Activated B cell treated with CpG ODN at 0.5 μM for 24 hours (primary cell): ENCODE measurements at regions of chr5 and their contacts with region 1.

Region 1: DNA sequence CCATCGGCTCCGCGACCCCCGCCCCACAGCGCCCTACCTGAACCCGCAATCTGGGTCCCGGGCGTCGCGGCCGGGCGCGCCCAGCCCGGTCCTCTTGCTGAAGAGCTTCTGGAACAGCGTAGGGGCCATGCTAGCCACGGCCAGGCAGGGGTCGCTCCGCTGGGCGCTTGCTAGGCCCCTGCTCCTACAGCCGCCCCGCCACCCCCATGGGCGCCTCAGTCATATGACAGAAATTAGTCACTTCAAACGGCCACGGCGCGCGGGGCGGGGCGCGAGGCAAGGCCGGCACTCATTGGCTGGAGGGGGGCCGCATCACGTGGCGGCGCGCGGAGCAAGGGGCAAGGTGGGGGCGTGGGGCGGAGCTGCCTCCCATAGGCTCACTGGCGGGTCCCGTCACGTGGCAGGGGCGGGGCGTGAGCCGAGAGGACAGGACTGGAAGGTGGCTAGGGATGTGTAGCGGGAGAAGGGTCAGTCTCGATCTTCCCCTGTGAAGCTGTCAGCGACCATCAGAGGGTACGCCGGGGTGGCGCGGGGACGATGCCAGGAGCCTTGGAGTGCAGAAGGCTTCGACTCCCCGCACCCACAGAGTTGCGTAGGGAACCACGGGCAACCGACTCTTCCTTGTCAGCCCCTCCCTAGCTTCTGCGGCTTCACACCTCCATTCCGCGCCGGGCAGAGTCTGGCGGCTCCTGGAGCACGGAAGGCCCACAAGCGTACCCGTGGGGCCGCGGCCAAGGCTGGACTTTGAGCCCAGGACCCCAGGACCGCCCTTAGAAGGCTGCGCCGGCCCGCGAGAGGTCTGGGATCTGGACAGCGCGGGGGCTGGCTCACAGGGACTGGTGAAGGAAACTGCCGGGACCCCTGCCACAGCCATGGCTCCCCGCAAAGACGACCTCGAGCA is at the start of gene FNIP1:
- DNase-seq: peak; percentile 99
- ATAC-seq: peak; percentile 94
- H3K4me3 Mint-ChIP-seq: peak within 1 kb of the TSS; percentile 97
- H3K27ac Mint-ChIP-seq: peak within 1 kb of the TSS; percentile 91
- H3K4me1 Mint-ChIP-seq: peaks cover 33% of the 10 kb centered on the region
- H3K27me3 Mint-ChIP-seq: no peaks in the 10 kb centered on the region
- CTCF ChIP-seq: no peak
- total RNA-seq, gene FNIP1: 29.8 and 34.0 TPM in 2 replicates

Region 2: DNA sequence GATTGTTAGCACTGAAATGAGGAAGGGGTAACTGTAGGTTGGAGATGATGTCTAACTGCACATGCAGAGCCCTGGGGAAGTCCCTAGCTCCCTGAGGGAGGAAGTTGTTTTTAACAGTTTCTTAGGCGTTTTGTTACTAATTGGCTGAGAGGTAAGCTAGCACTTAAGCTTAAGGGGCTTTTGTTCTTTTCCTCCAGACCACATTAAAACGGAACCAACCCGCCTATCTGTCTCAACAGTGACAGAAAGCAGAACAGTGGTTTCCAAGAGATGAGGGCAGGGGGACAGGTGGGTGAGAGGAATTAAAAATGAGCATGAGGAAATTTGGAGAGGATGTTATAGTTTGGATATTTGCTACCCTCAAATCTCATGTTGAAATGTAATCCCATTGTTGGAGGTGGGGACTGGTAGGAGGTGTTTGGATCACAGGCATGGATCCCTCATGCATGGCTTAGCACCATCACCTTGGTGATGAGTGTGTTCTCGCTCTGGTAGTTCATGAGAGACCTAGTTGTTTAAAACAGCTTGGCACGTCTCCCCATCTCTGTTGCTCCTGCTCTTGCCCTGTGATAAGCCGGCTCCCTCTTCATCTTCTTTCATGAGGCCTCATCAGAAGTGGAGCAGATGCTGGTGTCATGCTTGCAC is 587.4 kb before region 1 on chr5:
- CTCF ChIA-PET with region 1: no interaction called
- POLR2A ChIA-PET with region 1: no interaction called
- intact Hi-C with region 1: loop called (anchors 5 kb)
- DNase-seq: peak; percentile 44
- ATAC-seq: peak; percentile 87
- H3K4me3 Mint-ChIP-seq: peak overlapping the region; percentile 82
- H3K27ac Mint-ChIP-seq: peak overlapping the region; percentile 99
- H3K4me1 Mint-ChIP-seq: peaks cover 63% of the 10 kb centered on the region
- H3K27me3 Mint-ChIP-seq: no peaks in the 10 kb centered on the region
- CTCF ChIP-seq: no peak

Region 3: GRCh38 chr5:131536211-131536826 is 260.7 kb before region 1 on chr5:
- CTCF ChIA-PET with region 1: no interaction called
- POLR2A ChIA-PET with region 1: no interaction called
- intact Hi-C with region 1: loop called (anchors 2 kb)
- DNase-seq: no peak
- ATAC-seq: peak; percentile 84
- H3K4me3 Mint-ChIP-seq: peak overlapping the region; percentile 47
- H3K27ac Mint-ChIP-seq: peak overlapping the region; percentile 81
- H3K4me1 Mint-ChIP-seq: peaks cover 46% of the 10 kb centered on the region
- H3K27me3 Mint-ChIP-seq: no peaks in the 10 kb centered on the region
- CTCF ChIP-seq: no peak

Region 4: DNA sequence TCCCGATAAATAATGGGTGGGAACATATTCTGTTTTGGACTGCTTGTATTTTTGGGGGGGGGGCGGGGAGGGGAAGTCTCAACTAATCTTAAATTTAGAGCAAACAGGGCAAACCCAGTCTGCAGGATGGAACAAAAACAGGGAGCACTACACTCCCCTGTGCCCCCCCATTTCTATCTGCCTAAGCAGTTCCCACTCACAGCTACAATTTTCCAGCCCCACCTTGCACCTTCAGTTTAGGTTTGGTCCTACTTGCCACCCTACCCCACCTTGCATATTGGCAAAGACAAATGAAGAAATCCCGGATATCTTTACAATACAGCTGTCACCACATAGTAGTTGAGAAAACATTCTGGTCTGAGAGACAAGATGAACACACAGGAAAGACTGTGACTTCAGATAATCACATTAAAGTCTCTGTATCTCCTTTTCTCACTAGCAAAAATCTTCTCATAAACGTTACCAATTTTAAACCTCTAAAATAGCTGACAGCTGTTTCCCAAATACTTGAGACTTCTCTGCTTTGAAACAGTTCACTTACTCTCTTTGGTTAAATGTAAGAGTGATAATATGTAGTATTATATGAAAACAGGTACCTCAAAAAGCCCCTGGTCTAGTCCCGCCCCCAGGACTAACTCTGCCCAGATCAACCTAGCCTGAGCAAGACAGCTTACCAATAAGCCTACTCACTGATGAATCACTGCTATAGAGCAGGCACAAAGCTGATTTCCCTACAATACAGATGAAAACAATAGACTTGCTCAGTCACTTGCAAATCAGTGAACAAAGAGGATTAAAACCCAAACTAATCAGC is 156.8 kb before region 1 on chr5:
- CTCF ChIA-PET with region 1: no interaction called
- POLR2A ChIA-PET with region 1: interaction called, 10 read pairs
- intact Hi-C with region 1: loop called (anchors 1 kb)
- DNase-seq: no peak
- ATAC-seq: peak; percentile 89
- H3K4me3 Mint-ChIP-seq: peak overlapping the region; percentile 45
- H3K27ac Mint-ChIP-seq: peak overlapping the region; percentile 83
- H3K4me1 Mint-ChIP-seq: peaks cover 42% of the 10 kb centered on the region
- H3K27me3 Mint-ChIP-seq: no peaks in the 10 kb centered on the region
- CTCF ChIP-seq: no peak

Region 5: GRCh38 chr5:131747180-131748105 is 49.6 kb before region 1 on chr5:
- CTCF ChIA-PET with region 1: no interaction called
- POLR2A ChIA-PET with region 1: no interaction called
- intact Hi-C with region 1: loop called (anchors 10 kb)
- DNase-seq: no peak
- ATAC-seq: peak; percentile 54
- H3K4me3 Mint-ChIP-seq: peak overlapping the region; percentile 4
- H3K27ac Mint-ChIP-seq: peak overlapping the region; percentile 54
- H3K4me1 Mint-ChIP-seq: peaks cover 38% of the 10 kb centered on the region
- H3K27me3 Mint-ChIP-seq: no peaks in the 10 kb centered on the region
- CTCF ChIP-seq: no peak

Region 6: GRCh38 chr5:131863700-131864099 is 66.7 kb after region 1 on chr5:
- CTCF ChIA-PET with region 1: no interaction called
- POLR2A ChIA-PET with region 1: no interaction called
- intact Hi-C with region 1: no loop called
- DNase-seq: no peak
- ATAC-seq: no peak
- H3K4me3 Mint-ChIP-seq: no peak overlapping the region
- H3K27ac Mint-ChIP-seq: no peak overlapping the region
- H3K4me1 Mint-ChIP-seq: no peaks in the 10 kb centered on the region
- H3K27me3 Mint-ChIP-seq: no peaks in the 10 kb centered on the region
- CTCF ChIP-seq: no peak

Region 7: DNA sequence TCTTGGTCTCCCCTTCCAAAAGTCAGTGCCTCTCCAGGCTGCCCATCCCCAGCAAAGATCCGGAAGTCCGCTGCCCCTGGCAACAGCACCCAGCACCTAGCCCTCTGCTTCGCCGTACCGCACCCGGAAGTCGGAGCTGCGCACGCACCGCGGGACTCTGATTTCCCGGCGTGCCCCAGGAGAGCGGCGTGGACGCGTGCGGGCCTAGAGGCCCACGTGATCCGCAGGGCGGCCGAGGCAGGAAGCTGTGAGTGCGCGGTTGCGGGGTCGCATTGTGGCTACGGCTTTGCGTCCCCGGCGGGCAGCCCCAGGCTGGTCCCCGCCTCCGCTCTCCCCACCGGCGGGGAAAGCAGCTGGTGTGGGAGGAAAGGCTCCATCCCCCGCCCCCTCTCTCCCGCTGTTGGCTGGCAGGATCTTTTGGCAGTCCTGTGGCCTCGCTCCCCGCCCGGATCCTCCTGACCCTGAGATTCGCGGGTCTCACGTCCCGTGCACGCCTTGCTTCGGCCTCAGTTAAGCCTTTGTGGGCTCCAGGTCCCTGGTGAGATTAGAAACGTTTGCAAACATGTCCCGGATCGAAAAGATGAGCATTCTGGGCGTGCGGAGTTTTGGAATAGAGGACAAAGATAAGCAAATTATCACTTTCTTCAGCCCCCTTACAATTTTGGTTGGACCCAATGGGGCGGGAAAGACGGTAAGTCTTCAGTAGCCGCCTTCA is 759.9 kb after region 1 on chr5 and contains the start of gene RAD50:
- CTCF ChIA-PET with region 1: no interaction called
- POLR2A ChIA-PET with region 1: no interaction called
- intact Hi-C with region 1: loop called (anchors 10 kb)
- DNase-seq: peak; percentile 89
- ATAC-seq: peak; percentile 97
- H3K4me3 Mint-ChIP-seq: peak within 1 kb of the TSS; percentile 97
- H3K27ac Mint-ChIP-seq: peak within 1 kb of the TSS; percentile 94
- H3K4me1 Mint-ChIP-seq: peaks cover 28% of the 10 kb centered on the region
- H3K27me3 Mint-ChIP-seq: no peaks in the 10 kb centered on the region
- CTCF ChIP-seq: no peak
- total RNA-seq, gene RAD50: 42.5 and 42.6 TPM in 2 replicates